ENCODE measurements at regions of chr16 and their contacts with region 1.

Region 1: DNA sequence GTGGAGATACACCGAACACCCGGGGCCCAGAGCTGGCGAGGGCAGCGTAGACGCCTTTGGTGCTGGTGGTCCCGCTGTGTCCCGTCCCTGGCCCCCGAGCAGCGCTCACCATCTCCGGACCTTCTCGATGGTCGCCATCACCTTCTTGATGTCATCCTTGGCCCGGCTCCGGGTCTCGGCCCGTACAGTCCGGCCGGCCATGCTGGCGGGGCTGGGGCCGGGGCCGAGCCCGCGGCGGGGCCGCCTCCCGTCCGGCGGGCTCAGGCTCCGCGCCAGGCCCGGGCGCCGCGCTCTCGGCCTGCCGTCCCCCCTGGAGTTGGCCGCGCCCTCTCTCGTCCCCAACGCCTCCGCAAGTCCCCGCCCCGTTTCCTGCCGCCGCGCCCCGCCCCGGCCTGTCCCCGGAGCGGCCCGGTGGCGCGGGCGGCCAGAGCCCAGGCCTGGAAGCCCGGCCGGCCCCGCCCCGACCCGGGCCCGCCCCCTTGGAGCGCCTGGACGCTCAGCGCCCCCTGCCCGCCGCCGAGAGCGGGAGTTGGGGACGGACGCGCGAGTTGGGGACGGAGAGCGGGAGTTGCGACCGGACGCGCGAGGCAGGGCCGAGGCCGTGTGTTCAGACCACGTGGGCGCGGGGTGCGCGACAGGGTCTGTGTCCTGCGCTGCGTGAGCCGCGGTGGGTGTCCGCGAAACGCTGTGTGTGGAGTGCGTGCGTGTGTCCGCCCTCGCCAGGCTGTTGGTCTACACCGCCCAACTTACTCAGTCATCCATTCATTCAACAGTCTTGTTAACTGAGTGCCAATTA is at the start of gene BCL7C:
- DNase-seq: peak in 1 of 2 experiments; percentile 93
- H3K4me3 ChIP-seq: peak within 1 kb of the TSS; percentile 60 to 73 (median 67)
- H3K27ac ChIP-seq: no peak within 1 kb of the TSS; the same call in 1 of the 2 replicates
- H3K4me1 ChIP-seq: peaks cover 4 to 13% (median 12%) of the 10 kb centered on the region in 4 experiments
- H3K27me3 ChIP-seq: peaks cover 0 to 13% (median 7%) of the 10 kb centered on the region in 4 experiments; a peak in 5 of 7 replicates
- CTCF ChIP-seq: peak; percentile 53 to 63 (median 57)
- EP300 ChIP-seq: no peak
- POLR2A ChIP-seq: peak in 1 of 2 experiments; percentile 43; a peak in 2 of 3 replicates
- RAD21 ChIP-seq: peak in 1 of 2 experiments; percentile 45; a peak in 2 of 4 replicates
- total RNA-seq, gene BCL7C: 16.5 and 17.2 TPM in 2 replicates

Region 2: GRCh38 chr16:30882429-30883310 is 11.3 kb before region 1 on chr16:
- CTCF ChIA-PET with region 1: interaction called, 7 read pairs
- POLR2A ChIA-PET with region 1: interaction called, 40 read pairs
- DNase-seq: no peak
- H3K4me3 ChIP-seq: no peak overlapping the region
- H3K27ac ChIP-seq: no peak overlapping the region
- H3K4me1 ChIP-seq: no peaks in the 10 kb centered on the region
- H3K27me3 ChIP-seq: no peaks in the 10 kb centered on the region
- CTCF ChIP-seq: no peak
- EP300 ChIP-seq: no peak
- POLR2A ChIP-seq: no peak
- RAD21 ChIP-seq: no peak

Region 3: GRCh38 chr16:30984669-30985400 is 90.9 kb after region 1 on chr16 and contains the start of gene HSD3B7:
- CTCF ChIA-PET with region 1: no interaction called
- POLR2A ChIA-PET with region 1: no interaction called
- DNase-seq: peak; percentile 74 to 100
- H3K4me3 ChIP-seq: peak within 1 kb of the TSS in 3 of 4 experiments; percentile 20 to 50 (median 40); a peak in 5 of 8 replicates
- H3K27ac ChIP-seq: no peak within 1 kb of the TSS
- H3K4me1 ChIP-seq: peaks cover 0 to 5% (median 2%) of the 10 kb centered on the region in 4 experiments; a peak in 4 of 7 replicates
- H3K27me3 ChIP-seq: no peaks in the 10 kb centered on the region
- CTCF ChIP-seq: peak; percentile 88 to 96 (median 94)
- EP300 ChIP-seq: no peak
- POLR2A ChIP-seq: peak in 1 of 2 experiments; percentile 60; a peak in 2 of 3 replicates
- RAD21 ChIP-seq: peak; percentile 79 to 84
- total RNA-seq, gene HSD3B7: 2.9 and 3.1 TPM in 2 replicates

Region 4: GRCh38 chr16:31064882-31065461 is 171.0 kb after region 1 on chr16:
- CTCF ChIA-PET with region 1: no interaction called
- POLR2A ChIA-PET with region 1: no interaction called
- DNase-seq: no peak
- H3K4me3 ChIP-seq: no peak overlapping the region
- H3K27ac ChIP-seq: no peak overlapping the region
- H3K4me1 ChIP-seq: no peaks in the 10 kb centered on the region
- H3K27me3 ChIP-seq: no peaks in the 10 kb centered on the region
- CTCF ChIP-seq: no peak
- EP300 ChIP-seq: no peak
- POLR2A ChIP-seq: no peak
- RAD21 ChIP-seq: no peak

Measured in H1 (cell line).